AG04450 (cell line): ENCODE measurements at regions of chr5 and their contacts with region 1.

Region 1: GRCh38 chr5:96997265-96997859 is 61.5 kb downstream of the LNPEP start:
- DNase-seq: no peak
- H3K4me3 ChIP-seq: no peak overlapping the region
- H3K27ac ChIP-seq: no peak overlapping the region
- H3K27me3 ChIP-seq: no peaks in the 10 kb centered on the region
- CTCF ChIP-seq: peak; percentile 51

Region 2: GRCh38 chr5:96671441-96671840 is 325.9 kb before region 1 on chr5:
- CTCF ChIA-PET with region 1: no interaction called
- POLR2A ChIA-PET with region 1: no interaction called
- DNase-seq: no peak
- H3K4me3 ChIP-seq: no peak overlapping the region
- H3K27ac ChIP-seq: no peak overlapping the region
- H3K27me3 ChIP-seq: no peaks in the 10 kb centered on the region
- CTCF ChIP-seq: no peak

Region 3: GRCh38 chr5:96952118-96952750 is 45.1 kb before region 1 on chr5:
- CTCF ChIA-PET with region 1: no interaction called
- POLR2A ChIA-PET with region 1: no interaction called
- DNase-seq: no peak
- H3K4me3 ChIP-seq: no peak overlapping the region
- H3K27ac ChIP-seq: no peak overlapping the region
- H3K27me3 ChIP-seq: no peaks in the 10 kb centered on the region
- CTCF ChIP-seq: no peak

Region 4: DNA sequence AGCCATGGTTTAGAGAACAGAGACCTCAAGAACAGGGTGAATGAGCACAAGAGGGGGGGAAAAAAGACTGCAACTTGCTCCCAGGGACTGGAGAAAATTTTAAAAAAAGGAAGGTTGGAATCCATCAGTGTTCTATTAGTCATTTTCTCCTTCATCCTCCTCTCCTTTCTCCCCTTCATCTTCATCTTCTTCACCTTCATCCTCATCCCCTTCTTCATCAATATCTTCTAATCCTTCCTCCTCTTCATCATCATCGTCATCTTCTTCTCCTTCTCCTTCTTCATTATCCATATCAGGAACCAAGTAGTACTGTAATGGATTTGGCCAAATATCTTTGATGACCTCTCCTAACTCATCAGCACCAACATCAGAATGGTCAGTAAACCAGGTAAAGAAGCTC is 58.9 kb after region 1 on chr5:
- CTCF ChIA-PET with region 1: no interaction called
- POLR2A ChIA-PET with region 1: no interaction called
- DNase-seq: no peak
- H3K4me3 ChIP-seq: no peak overlapping the region
- H3K27ac ChIP-seq: no peak overlapping the region
- H3K27me3 ChIP-seq: peaks cover 21% of the 10 kb centered on the region
- CTCF ChIP-seq: no peak

Region 5: GRCh38 chr5:97142521-97143254 is 145.3 kb after region 1 on chr5 and contains the start of gene LIX1:
- CTCF ChIA-PET with region 1: interaction called, 21 read pairs
- POLR2A ChIA-PET with region 1: no interaction called
- DNase-seq: no peak
- H3K4me3 ChIP-seq: no peak within 1 kb of the TSS
- H3K27ac ChIP-seq: no peak within 1 kb of the TSS
- H3K27me3 ChIP-seq: peaks cover 14% of the 10 kb centered on the region
- CTCF ChIP-seq: peak; percentile 64
- polyA plus RNA-seq, gene LIX1: not detected in 2 replicates

Region 6: DNA sequence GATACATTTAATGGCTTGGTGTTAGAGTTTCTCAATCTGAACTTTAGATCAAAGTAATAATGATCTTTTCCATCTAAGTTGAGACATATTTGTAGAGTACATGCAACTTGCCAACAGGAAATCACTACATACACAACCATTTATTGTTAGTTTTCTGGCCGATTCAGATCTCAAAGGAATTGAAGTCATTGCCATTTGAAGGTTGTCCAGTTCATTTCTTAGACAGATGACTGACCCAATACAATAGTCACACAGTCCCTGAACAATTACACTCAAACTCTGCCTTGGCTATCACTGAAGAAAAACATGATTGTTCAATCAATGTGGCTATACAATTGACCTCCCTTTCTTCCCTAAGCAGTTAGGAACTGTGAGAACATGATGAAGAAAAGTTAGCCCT is 938.9 kb after region 1 on chr5:
- CTCF ChIA-PET with region 1: no interaction called
- POLR2A ChIA-PET with region 1: no interaction called
- DNase-seq: no peak
- H3K4me3 ChIP-seq: no peak overlapping the region
- H3K27ac ChIP-seq: no peak overlapping the region
- H3K27me3 ChIP-seq: no peaks in the 10 kb centered on the region
- CTCF ChIP-seq: no peak